WTC11 (cell line): ENCODE measurements at regions of chr1 and their contacts with region 1.

Region 1: DNA sequence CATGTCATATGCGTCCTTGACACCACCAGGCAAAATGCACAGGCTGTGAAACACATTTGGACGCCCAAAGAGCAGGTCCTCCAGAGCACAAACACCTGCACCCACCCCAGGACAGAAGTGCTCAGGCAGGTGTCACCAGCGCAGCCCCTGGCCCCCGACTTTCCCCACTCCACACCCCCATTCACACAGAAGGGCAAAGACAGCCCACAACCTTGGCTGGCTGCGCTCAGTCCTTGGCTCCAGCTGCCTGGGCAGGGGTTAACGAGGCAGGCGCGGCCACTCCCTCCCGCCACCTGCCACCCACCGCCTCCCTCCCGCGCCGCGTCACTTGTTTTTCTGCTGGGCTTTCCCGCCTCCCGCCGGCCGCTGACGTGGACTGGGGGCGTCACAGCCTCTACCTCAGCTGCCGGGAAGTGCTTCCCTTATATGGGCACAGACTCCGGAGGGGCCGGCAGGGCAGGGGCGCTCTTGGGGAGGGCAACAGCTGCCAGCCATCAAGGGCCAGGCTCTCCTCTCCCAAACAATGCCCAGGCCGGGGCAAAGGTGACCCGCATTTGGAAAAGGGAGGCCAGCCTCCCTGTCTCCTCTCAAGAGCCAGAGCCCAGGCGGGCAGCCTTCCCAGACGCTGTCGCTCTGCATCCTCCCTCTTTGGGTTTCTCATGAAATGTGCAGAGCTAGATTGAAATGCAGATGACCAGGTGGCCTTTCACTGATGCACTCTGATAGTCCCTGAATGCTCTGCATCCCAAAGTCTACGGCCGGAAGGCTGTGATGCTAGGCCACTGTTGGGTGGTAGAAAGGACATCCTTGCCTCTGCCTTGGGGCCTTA is 14.8 kb upstream of the BTG2 start:
- DNase-seq: peak; percentile 93
- ATAC-seq: peak; percentile 83
- H3K4me3 Mint-ChIP-seq: peak overlapping the region; percentile 63
- H3K27ac Mint-ChIP-seq: peak overlapping the region; percentile 97
- H3K4me1 Mint-ChIP-seq: peaks cover 55% of the 10 kb centered on the region
- H3K27me3 Mint-ChIP-seq: peaks cover 64% of the 10 kb centered on the region
- CTCF ChIP-seq: no peak

Region 2: DNA sequence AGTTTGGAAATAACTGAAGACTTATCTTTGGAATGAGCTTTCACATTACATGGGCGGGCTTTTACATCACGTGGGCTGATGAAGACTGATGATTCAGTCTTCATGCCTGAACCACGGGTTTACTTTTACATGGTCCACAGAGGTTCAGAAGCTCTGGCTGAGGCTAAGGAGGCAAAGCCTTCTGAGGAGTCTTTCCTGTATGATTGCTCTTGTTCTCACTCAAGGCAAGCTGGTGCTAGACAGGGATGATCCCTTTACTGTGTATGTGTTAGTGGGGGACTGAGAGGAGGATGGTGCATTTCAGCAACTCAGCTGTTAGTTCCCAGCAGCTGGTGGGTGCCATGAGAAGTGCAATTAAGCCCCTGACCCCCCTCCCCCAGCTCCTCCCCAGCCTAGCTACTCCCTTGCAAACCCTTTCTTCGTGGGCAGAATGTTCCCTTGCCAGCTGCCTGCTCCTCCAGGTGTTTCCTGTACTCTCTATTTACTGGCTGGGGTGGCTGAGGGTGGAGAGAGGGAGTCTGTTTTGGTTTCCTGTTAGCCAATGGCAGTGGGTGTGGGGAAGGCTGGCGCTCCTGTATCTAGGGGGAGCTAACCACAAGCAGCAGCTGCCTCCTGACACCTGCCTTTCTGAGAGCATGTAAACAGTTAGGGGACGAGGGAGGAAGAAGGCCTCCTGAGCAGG is 30.3 kb after region 1 on chr1:
- CTCF ChIA-PET with region 1: interaction called, 4 read pairs
- POLR2A ChIA-PET with region 1: interaction called, 11 read pairs
- DNase-seq: peak; percentile 63
- ATAC-seq: peak; percentile 97
- H3K4me3 Mint-ChIP-seq: no peak overlapping the region
- H3K27ac Mint-ChIP-seq: no peak overlapping the region
- H3K4me1 Mint-ChIP-seq: peaks cover 36% of the 10 kb centered on the region
- H3K27me3 Mint-ChIP-seq: peaks cover 96% of the 10 kb centered on the region
- CTCF ChIP-seq: no peak